ENCODE measurements at regions of chr2 and their contacts with region 1.

Region 1: DNA sequence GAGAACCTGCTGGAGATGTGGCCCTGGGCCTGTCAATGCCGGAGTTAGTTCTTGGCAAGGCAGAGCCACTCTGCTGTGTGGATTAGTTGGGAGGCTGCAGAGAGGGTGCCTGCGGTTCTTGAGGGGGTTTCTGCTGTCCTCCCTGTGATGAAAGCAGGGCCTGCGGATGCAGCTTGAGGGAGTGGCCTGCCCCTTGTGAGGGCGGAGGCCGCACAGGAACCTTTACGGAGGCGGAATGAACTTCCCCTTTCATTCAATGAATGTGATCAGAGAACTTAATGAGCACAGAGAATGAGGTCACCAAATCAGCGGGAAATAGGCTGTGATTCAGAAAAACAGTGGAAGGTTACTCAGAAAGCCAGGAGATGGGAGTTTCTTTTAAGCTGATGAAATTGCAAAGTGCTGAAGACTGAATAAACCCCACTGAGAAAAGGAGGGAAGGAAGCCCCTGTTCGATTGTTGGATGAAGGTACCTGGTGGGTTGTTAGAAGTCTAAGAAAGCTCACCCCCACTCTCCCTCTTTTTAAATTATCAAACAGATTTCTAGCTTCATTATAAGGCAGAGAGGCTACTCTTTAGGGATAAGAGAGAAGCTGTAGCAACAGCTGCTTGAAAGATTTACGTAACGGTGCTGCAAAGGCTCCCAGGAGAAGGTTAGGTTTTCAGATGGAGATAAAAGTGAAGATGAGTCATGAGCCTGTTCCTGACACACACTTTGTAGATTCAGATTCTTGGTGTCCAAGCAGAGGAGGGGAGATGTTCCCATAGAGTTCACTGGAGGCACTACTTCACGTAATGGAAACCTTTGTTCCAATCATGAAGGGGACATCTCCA is 47.4 kb downstream of the VWA3B start:
- DNase-seq: peak; percentile 82
- H3K4me3 Mint-ChIP-seq: peak overlapping the region; percentile 15
- H3K27ac Mint-ChIP-seq: peak overlapping the region; percentile 56
- H3K4me1 Mint-ChIP-seq: peaks cover 15% of the 10 kb centered on the region
- H3K27me3 Mint-ChIP-seq: no peaks in the 10 kb centered on the region

Region 2: DNA sequence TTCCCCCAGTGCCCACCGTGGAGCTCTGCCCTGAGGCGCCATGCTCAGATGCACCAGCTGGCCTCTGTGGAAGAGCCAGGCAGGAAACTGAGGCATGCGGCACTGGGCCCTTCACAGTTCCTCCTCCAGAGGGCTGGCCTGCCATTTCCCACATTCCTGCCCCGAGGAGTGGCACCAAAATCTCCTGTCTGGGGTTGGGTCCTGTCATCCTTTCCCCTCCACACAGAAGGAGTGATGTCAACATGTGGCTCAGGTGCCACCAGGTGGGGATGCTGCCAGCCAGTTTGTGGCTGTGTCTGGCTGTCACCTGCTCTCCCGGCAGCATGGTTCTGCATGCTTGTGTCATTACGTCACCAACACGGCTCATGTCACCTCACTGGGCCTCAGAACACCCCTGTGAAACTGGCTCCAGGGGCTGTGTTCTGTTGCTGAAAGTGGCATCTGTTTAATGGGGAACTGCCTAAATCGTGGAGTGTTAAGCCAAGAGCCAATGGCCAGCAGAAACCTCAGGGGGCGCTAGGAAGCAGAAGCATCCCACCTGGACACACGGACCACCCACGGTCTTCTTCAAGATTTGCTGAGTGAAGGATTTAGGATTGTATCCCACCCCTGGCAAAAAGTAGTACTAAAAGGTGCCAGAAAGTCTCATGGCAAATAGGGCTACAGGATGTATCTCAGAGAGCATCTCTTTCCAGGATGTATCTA is 369.7 kb before region 1 on chr2:
- intact Hi-C with region 1: no loop called
- DNase-seq: no peak
- H3K4me3 Mint-ChIP-seq: no peak overlapping the region
- H3K27ac Mint-ChIP-seq: no peak overlapping the region
- H3K4me1 Mint-ChIP-seq: peaks cover 31% of the 10 kb centered on the region
- H3K27me3 Mint-ChIP-seq: no peaks in the 10 kb centered on the region

Region 3: GRCh38 chr2:97812931-97813330 is 321.5 kb before region 1 on chr2:
- intact Hi-C with region 1: loop called (anchors 10 kb)
- DNase-seq: peak; percentile 36
- H3K4me3 Mint-ChIP-seq: no peak overlapping the region
- H3K27ac Mint-ChIP-seq: no peak overlapping the region
- H3K4me1 Mint-ChIP-seq: no peaks in the 10 kb centered on the region
- H3K27me3 Mint-ChIP-seq: no peaks in the 10 kb centered on the region

Region 4: DNA sequence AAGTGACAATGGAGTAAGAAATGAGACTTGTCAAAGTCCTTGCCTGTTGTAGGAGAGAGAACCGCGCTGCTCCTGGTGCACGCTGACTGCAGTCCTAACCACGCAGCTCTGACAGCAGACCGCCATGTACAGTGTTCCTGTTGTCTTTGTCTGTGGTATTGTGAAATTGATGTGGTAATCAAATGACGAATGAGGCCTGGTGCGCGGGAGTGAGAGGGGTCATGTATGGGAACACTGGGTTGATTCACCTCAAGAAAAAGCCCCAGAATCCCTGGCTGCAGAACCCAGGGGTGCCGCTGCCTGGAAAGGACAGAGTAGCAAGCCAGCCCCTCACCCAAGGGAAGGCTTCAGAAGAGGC is 374.3 kb after region 1 on chr2:
- intact Hi-C with region 1: no loop called
- DNase-seq: peak; percentile 82
- H3K4me3 Mint-ChIP-seq: peak overlapping the region; percentile 73
- H3K27ac Mint-ChIP-seq: peak overlapping the region; percentile 91
- H3K4me1 Mint-ChIP-seq: peaks cover 69% of the 10 kb centered on the region
- H3K27me3 Mint-ChIP-seq: no peaks in the 10 kb centered on the region